Colonic mucosa (tissue), 4 donors: ENCODE measurements at regions of chr2 and their contacts with region 1.

Region 1: DNA sequence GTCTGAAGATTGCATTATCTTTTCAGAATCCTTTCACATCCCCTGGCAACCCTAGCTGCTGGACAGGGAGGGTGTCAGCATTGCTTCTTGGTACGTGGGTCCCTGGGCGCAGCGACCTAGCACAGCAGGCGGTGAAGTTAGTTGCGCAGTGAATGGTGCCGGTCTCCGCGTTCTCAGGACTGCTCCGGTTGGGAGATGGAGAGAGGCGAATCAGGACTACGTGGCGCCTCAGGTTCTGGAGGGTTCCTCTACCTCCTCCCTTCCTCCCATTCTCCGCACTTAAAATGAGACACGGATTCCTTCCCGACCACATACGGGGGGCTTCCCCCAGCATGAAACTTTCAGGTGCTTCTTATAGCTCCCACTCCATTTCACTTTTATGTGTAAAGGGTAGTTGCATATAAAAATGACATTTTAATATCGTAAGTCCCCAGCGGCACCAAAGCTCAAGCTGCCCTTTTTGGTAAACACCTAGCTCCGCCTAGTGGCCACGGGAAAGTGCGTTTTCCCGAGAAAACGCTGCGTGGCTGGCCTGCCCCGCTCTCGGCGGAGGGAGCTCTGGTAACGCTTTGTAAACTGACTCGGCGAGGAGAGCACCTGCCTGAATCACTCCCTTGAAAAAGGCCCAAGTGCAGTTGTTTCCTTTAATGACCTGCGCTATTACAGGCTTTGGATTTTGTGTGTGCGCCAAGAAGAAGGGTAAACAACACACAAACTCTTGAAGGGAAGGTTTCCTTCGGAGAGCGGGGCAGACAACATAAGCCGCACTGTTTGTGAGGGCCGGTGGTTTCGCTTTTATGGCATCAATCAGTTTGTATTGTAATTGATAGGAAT is 32.9 kb upstream of the INHBB start:
- DNase-seq: peak; percentile 89
- H3K4me3 ChIP-seq: peak overlapping the region; percentile 22
- H3K27ac ChIP-seq: no peak overlapping the region
- H3K4me1 ChIP-seq: peaks cover 3% of the 10 kb centered on the region
- H3K27me3 ChIP-seq: no peaks in the 10 kb centered on the region
- CTCF ChIP-seq: peak; percentile 90

Region 2: GRCh38 chr2:120189189-120189588 is 123.9 kb before region 1 on chr2:
- intact Hi-C with region 1: no loop called
- DNase-seq: no peak
- H3K4me3 ChIP-seq: no peak overlapping the region
- H3K27ac ChIP-seq: no peak overlapping the region
- H3K4me1 ChIP-seq: no peaks in the 10 kb centered on the region
- H3K27me3 ChIP-seq: no peaks in the 10 kb centered on the region
- CTCF ChIP-seq: no peak

Region 3: GRCh38 chr2:120206022-120206581 is 107.0 kb before region 1 on chr2:
- intact Hi-C with region 1: loop called (anchors 10 kb)
- DNase-seq: peak; percentile 54
- H3K4me3 ChIP-seq: no peak overlapping the region
- H3K27ac ChIP-seq: no peak overlapping the region
- H3K4me1 ChIP-seq: no peaks in the 10 kb centered on the region
- H3K27me3 ChIP-seq: no peaks in the 10 kb centered on the region
- CTCF ChIP-seq: peak; percentile 40

Region 4: GRCh38 chr2:120252225-120253021 is 60.7 kb before region 1 on chr2 and contains the start of gene RALB:
- intact Hi-C with region 1: loop called (anchors 10 kb)
- DNase-seq: peak; percentile 100
- H3K4me3 ChIP-seq: peak within 1 kb of the TSS; percentile 83
- H3K27ac ChIP-seq: peak within 1 kb of the TSS; percentile 91
- H3K4me1 ChIP-seq: no peaks in the 10 kb centered on the region
- H3K27me3 ChIP-seq: no peaks in the 10 kb centered on the region
- CTCF ChIP-seq: no peak
- total RNA-seq, gene RALB: 71.8 to 93.4 TPM